ENCODE measurements at regions of chr4 and their contacts with region 1.

Region 1: DNA sequence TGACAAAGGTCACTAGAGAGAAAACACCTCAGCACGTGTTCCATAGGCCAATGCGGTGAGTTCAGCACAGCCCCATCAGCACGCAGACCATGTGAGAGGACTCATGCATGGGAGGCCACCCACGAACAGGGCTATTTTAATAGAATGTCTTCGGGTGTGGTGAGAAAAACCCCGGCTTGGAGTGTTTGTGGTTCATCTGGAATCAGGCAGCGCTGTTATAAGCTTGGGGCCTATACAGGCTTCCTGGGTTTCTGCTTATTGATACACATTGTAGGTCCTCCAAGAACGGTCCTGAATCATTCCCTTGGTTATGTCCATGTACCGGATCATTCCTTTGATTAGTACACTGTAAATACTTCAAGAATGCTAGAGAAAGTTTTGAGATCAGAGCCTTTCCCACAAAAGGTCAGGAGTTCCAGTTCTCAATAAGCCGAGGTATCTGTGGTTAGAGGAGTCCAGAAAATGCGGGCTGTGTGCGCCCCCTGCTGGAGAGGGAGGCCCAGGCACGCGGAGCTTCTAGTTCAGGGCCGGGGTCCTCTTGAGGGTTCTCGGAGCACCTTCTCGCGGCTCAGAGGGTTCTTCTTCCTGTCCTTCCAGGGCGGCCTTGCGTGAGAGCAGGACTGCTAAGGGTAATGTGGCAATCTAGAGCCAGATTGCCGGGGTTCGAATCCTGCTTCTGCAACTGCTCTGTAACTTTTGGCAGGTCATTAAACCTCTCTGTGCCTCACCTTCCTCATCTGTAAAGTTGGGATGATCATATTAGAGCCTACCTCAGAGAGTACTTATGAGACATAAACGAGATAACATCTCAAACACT is 51.8 kb downstream of the TLR10 start:
- DNase-seq: peak; percentile 52 to 95 (median 82)
- ATAC-seq: peak; percentile 81 to 98 (median 91)
- H3K4me3 ChIP-seq: no peak overlapping the region
- H3K27ac ChIP-seq: no peak overlapping the region
- H3K4me1 ChIP-seq: peaks cover 0 to 8% (median 3%) of the 10 kb centered on the region in 3 donors
- H3K27me3 ChIP-seq: no peaks in the 10 kb centered on the region
- CTCF ChIP-seq: peak; percentile 92 to 95 (median 94)

Region 2: DNA sequence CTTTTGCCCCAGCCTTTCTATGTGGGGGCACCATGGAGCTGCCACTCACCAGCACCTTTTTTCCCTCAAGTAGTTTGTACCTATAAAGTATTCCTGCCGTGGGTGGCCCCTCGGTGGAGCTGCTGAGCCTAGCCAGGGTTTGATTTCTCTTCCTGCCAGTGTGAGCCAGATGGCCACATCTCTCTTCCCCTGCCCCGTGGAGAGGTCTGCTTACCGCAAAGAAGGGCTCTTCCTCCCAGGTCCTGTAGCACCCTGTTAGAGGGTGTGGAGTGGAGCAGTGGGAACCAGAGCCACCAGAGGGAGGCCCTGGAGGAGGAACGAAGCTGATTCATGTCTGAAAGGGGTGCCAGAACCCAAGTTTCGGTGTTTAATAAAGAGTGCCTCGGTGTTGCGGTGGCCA is 675.5 kb before region 1 on chr4:
- intact Hi-C with region 1: loop called in 2 of 3 experiments (anchors 5 to 10 kb)
- DNase-seq: no peak
- ATAC-seq: no peak
- H3K4me3 ChIP-seq: no peak overlapping the region
- H3K27ac ChIP-seq: peak overlapping the region in 1 of 4 donors; percentile 28
- H3K4me1 ChIP-seq: peaks cover 0 to 14% (median under 1%) of the 10 kb centered on the region in 3 donors
- H3K27me3 ChIP-seq: no peaks in the 10 kb centered on the region
- CTCF ChIP-seq: no peak

Region 3: GRCh38 chr4:38062088-38062893 is 668.7 kb before region 1 on chr4:
- intact Hi-C with region 1: loop called in 2 of 3 experiments (anchors 5 to 10 kb)
- DNase-seq: peak in 5 of 6 donors; percentile 70 to 83 (median 77)
- ATAC-seq: peak; percentile 81 to 97 (median 94)
- H3K4me3 ChIP-seq: peak overlapping the region in 2 of 4 donors; percentile 7 to 32
- H3K27ac ChIP-seq: peak overlapping the region in 2 of 4 donors; percentile 60 to 65
- H3K4me1 ChIP-seq: peaks cover 0 to 6% (median 0%) of the 10 kb centered on the region in 3 donors
- H3K27me3 ChIP-seq: no peaks in the 10 kb centered on the region
- CTCF ChIP-seq: peak; percentile 60 to 81 (median 78)

Region 4: DNA sequence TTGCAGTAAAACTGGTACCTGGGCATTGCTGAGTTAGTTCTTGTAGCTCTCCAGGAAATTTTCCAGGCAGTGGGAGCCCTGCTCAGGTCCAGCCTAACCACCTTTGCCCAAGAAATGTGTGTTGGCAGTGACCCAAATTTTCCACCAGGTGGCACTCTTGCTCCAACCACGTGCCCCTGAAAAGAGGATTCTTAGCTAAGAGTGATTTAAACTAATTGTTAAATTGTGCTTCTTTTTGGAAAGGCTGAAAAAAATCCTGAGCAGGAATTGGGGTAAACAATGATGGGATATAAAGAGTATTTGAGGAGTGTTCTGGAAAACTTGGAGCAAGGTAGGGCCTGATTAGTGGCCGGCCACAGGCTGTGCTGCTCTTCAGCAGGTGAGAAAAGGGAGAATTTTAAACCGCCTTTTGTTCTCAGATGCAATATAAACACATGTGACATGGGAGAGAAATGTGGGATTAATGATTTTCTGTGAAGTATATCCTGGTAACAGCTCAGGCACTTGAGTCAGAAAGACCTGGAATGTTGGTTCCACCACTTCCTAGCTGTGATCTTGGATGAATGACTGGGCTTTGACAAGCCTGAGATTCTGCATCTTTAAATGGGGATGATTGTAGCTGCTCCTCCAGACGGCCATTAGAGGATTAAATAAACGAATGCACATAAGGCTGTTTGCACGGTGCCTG is 551.2 kb before region 1 on chr4:
- intact Hi-C with region 1: loop called in 1 of 3 experiments (anchors 5 kb)
- DNase-seq: peak; percentile 76 to 87 (median 78)
- ATAC-seq: peak; percentile 74 to 80 (median 80)
- H3K4me3 ChIP-seq: no peak overlapping the region
- H3K27ac ChIP-seq: peak overlapping the region in 1 of 4 donors; percentile 57
- H3K4me1 ChIP-seq: peaks cover 10 to 20% (median 17%) of the 10 kb centered on the region in 3 donors
- H3K27me3 ChIP-seq: no peaks in the 10 kb centered on the region
- CTCF ChIP-seq: peak; percentile 68 to 88 (median 84)

Region 5: GRCh38 chr4:38190717-38191178 is 540.3 kb before region 1 on chr4:
- intact Hi-C with region 1: loop called in 1 of 3 experiments (anchors 5 kb)
- DNase-seq: no peak
- ATAC-seq: peak in 2 of 4 donors; percentile 13 to 14
- H3K4me3 ChIP-seq: no peak overlapping the region
- H3K27ac ChIP-seq: no peak overlapping the region
- H3K4me1 ChIP-seq: no peaks in the 10 kb centered on the region
- H3K27me3 ChIP-seq: no peaks in the 10 kb centered on the region
- CTCF ChIP-seq: no peak

Region 6: DNA sequence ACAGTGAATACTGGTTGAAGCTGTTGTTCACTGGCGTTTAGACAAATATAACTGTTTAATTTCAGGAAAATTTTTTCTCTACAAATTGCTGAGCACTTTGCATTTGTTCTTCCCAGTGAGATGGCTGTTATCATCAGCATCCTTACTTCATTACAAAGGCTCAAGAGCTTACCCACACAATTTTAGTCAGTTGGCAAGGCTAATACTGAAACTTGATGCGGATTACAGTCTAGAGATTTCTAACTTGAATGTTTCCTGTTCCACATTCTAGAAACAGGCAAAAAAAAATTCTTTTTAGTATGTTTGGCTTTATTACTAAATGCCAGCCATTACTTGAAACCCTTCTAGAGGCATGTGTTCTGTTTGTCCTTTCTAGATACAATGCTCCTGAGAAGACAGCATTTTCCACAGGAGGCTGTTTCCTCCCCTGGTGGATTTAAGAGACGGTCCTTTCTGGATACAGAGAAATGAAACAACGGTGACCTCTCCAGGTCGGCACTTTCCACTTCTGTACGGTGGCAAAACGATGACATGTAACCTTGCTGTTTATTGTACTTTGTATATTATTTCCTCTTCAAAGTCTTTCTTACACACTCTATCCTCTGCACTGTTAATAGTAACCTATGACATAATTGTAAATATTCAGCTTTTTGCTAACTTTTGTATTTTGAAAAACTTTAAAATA is 554.2 kb after region 1 on chr4:
- intact Hi-C with region 1: no loop called
- DNase-seq: no peak
- ATAC-seq: no peak
- H3K4me3 ChIP-seq: no peak overlapping the region
- H3K27ac ChIP-seq: no peak overlapping the region
- H3K4me1 ChIP-seq: no peaks in the 10 kb centered on the region
- H3K27me3 ChIP-seq: no peaks in the 10 kb centered on the region
- CTCF ChIP-seq: no peak

Measured in pancreas (tissue), 10 donors.